ENCODE measurements at regions of chr4 and their contacts with region 1.

Region 1: DNA sequence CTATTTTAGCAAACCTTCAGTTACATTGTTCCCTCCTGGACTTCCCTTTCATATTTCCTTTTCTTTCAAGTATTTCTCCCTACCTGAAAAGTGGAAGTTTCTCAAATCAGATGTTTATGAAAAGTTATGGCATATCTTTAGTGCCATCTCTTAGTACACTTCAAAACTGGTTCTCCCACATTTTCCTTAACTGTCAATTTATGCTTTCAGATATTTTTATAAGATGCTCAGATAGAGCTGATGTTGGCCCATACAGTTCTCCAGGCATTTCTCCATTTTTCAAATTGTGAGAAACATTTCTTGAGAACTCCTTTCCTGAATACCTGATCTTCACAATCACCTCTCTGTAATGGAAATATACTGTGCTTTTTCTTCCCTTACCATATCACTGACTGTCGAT is 32.5 kb upstream of the AP1AR start:
- DNase-seq: no peak
- ATAC-seq: peak; percentile 10
- H3K4me3 Mint-ChIP-seq: no peak overlapping the region
- H3K27ac Mint-ChIP-seq: peak overlapping the region; percentile 42
- H3K4me1 Mint-ChIP-seq: peaks cover 20% of the 10 kb centered on the region
- H3K27me3 Mint-ChIP-seq: peaks cover 4% of the 10 kb centered on the region

Region 2: DNA sequence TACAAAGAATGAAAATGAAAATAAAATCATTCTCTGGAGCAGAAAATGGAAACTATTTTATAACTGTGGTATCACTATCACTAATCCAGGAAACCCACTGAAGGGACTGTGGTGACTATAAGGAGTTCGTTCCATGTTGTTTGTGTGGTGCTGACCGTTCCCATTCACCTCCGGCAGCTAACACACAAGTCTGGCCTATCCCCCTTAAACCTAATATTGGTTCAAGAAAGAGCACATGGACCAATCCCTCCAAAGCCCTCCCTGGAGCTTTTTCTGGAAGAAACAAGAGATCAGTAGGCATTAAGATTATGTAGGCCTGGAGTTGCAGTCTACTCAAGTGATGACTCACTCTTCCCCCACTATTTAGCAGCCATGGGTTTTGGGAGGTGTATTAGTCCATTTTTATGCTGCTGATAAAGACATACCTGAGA is 79.7 kb before region 1 on chr4:
- CTCF ChIA-PET with region 1: no interaction called
- POLR2A ChIA-PET with region 1: no interaction called
- intact Hi-C with region 1: loop called (anchors 1 to 2 kb)
- DNase-seq: peak; percentile 24
- ATAC-seq: peak; percentile 87
- H3K4me3 Mint-ChIP-seq: no peak overlapping the region
- H3K27ac Mint-ChIP-seq: peak overlapping the region; percentile 83
- H3K4me1 Mint-ChIP-seq: peaks cover 15% of the 10 kb centered on the region
- H3K27me3 Mint-ChIP-seq: no peaks in the 10 kb centered on the region

Region 3: DNA sequence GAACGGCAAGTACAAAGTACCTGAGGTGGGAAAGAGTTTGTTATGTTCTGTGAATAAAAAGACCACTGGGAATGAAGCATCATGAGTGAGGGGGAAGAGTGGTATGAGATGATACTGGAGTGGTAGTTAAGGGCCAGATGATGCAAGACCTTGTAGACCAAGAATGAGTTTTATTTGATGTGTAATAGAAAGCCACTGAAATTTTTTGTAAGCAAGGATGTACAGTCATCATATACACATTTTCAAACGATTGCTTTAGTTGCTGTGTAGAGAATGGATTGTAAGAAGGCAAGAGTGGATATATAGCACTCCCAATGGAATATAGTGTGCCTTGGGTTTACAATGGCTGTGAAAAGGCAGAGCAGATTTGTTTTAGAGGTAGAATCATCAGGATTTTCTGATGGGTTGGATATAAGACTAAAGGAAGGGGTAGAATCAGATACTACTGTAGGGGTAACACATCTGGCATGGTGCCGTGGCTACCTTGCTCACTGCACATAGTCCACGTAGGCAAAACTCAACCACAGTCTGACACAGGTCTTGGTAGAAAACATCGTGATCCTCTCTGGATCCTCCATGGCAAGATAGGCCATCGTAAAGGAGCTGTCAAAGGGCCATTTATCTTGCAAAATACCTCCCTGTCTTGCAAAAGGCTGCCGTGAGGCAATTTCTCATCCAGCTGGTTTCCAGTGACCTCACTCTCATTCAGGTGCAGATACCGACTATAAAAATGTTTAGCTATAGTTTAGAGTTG is 71.8 kb after region 1 on chr4:
- CTCF ChIA-PET with region 1: no interaction called
- POLR2A ChIA-PET with region 1: interaction called, 11 read pairs
- intact Hi-C with region 1: loop called in 1 of 2 experiments (anchors 2 kb)
- DNase-seq: no peak
- ATAC-seq: peak; percentile 44
- H3K4me3 Mint-ChIP-seq: no peak overlapping the region
- H3K27ac Mint-ChIP-seq: peak overlapping the region; percentile 80
- H3K4me1 Mint-ChIP-seq: peaks cover 57% of the 10 kb centered on the region
- H3K27me3 Mint-ChIP-seq: no peaks in the 10 kb centered on the region

Region 4: GRCh38 chr4:113122066-113122465 is 923.0 kb after region 1 on chr4:
- CTCF ChIA-PET with region 1: no interaction called
- POLR2A ChIA-PET with region 1: no interaction called
- intact Hi-C with region 1: no loop called
- DNase-seq: no peak
- ATAC-seq: no peak
- H3K4me3 Mint-ChIP-seq: no peak overlapping the region
- H3K27ac Mint-ChIP-seq: no peak overlapping the region
- H3K4me1 Mint-ChIP-seq: no peaks in the 10 kb centered on the region
- H3K27me3 Mint-ChIP-seq: no peaks in the 10 kb centered on the region

Measured in activated CD4-positive, alpha-beta T cell treated with anti-CD3 and anti-CD28 coated beads for 36 hours (primary cell).